Left cardiac atrium (tissue), 4 donors: ENCODE measurements at regions of chr13 and their contacts with region 1.

Region 1: DNA sequence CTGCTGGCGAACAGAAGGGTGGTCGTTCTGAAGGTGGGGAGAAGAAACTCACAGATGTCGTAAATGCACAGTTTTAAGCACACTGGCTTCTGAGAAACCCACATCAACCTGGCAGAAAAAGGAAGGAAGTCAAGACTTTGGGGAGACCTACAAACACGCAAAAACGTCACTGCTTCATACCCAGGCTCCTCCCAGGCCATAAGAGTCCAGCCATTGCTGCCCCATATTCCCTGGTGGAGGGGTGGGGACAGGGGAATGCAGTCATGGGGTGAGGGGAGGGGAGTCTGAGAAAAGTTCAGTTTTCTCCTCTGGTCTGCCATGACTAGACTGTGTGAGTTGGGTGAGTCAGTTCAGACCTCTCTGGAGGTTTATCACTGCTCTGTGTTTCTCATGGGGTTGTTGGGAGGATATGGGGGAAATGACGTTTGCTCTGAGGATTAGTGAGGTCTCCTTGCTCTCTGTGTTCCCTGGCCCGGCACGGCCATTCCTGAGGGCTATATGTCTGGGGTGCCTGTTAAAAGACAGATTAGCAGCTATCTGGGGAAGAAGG is 139.0 kb downstream of the FLT1 start:
- DNase-seq: no peak
- ATAC-seq: peak; percentile 39 to 55

Region 2: GRCh38 chr13:28401303-28402056 is 45.6 kb after region 1 on chr13:
- intact Hi-C with region 1: loop called in 1 of 2 experiments (anchors 10 kb)
- DNase-seq: no peak
- ATAC-seq: peak in 1 of 2 donors; percentile 29

Region 3: GRCh38 chr13:28475916-28476725 is 120.2 kb after region 1 on chr13:
- intact Hi-C with region 1: no loop called
- DNase-seq: no peak
- ATAC-seq: peak; percentile 72 to 94